CD8-positive, alpha-beta T cell (primary cell): ENCODE measurements at regions of chr17 and their contacts with region 1.

Region 1: GRCh38 chr17:45247429-45248131 is 14.3 kb downstream of the SPATA32 start:
- DNase-seq: peak; percentile 95 to 99 (median 98)
- ATAC-seq: peak; percentile 81
- H3K4me3 ChIP-seq: peak overlapping the region; percentile 58 to 94
- H3K4me3 Mint-ChIP-seq: peak overlapping the region; percentile 87
- H3K27ac ChIP-seq: peak overlapping the region; percentile 88 to 89
- H3K27ac Mint-ChIP-seq: peak overlapping the region; percentile 97
- H3K4me1 ChIP-seq: peaks cover 67% of the 10 kb centered on the region
- H3K4me1 Mint-ChIP-seq: peaks cover 61% of the 10 kb centered on the region
- H3K27me3 ChIP-seq: no peaks in the 10 kb centered on the region
- H3K27me3 Mint-ChIP-seq: no peaks in the 10 kb centered on the region
- CTCF ChIP-seq: no peak

Region 2: GRCh38 chr17:45077643-45078042 is 169.9 kb before region 1 on chr17:
- CTCF ChIA-PET with region 1: no interaction called
- POLR2A ChIA-PET with region 1: no interaction called
- intact Hi-C with region 1: no loop called
- DNase-seq: no peak
- ATAC-seq: no peak
- H3K4me3 ChIP-seq: no peak overlapping the region
- H3K4me3 Mint-ChIP-seq: no peak overlapping the region
- H3K27ac ChIP-seq: no peak overlapping the region
- H3K27ac Mint-ChIP-seq: peak overlapping the region; percentile 32
- H3K4me1 ChIP-seq: no peaks in the 10 kb centered on the region
- H3K4me1 Mint-ChIP-seq: peaks cover 27% of the 10 kb centered on the region
- H3K27me3 ChIP-seq: no peaks in the 10 kb centered on the region
- H3K27me3 Mint-ChIP-seq: no peaks in the 10 kb centered on the region
- CTCF ChIP-seq: no peak

Region 3: GRCh38 chr17:45148183-45149036 is 99.2 kb before region 1 on chr17 and contains the start of gene HEXIM1:
- CTCF ChIA-PET with region 1: no interaction called
- POLR2A ChIA-PET with region 1: interaction called, 28 read pairs
- intact Hi-C with region 1: loop called (anchors 1 kb)
- DNase-seq: peak; percentile 98 to 100 (median 99)
- ATAC-seq: peak; percentile 80
- H3K4me3 ChIP-seq: peak within 1 kb of the TSS; percentile 68 to 80
- H3K4me3 Mint-ChIP-seq: peak within 1 kb of the TSS; percentile 98
- H3K27ac ChIP-seq: peak within 1 kb of the TSS; percentile 84 to 94
- H3K27ac Mint-ChIP-seq: peak within 1 kb of the TSS; percentile 100
- H3K4me1 ChIP-seq: peaks cover 41% of the 10 kb centered on the region
- H3K4me1 Mint-ChIP-seq: peaks cover 54% of the 10 kb centered on the region
- H3K27me3 ChIP-seq: no peaks in the 10 kb centered on the region
- H3K27me3 Mint-ChIP-seq: no peaks in the 10 kb centered on the region
- CTCF ChIP-seq: no peak
- total RNA-seq, gene HEXIM1: 76.5 to 77.2 TPM

Region 4: GRCh38 chr17:45218895-45219661 is 28.5 kb before region 1 on chr17:
- CTCF ChIA-PET with region 1: interaction called, 1,097 read pairs
- POLR2A ChIA-PET with region 1: interaction called, 40 read pairs
- intact Hi-C with region 1: loop called in 1 of 2 experiments (anchors 1 kb)
- DNase-seq: peak; percentile 79 to 95 (median 89)
- ATAC-seq: peak; percentile 45
- H3K4me3 ChIP-seq: peak overlapping the region in 1 of 2 experiments; percentile 1
- H3K4me3 Mint-ChIP-seq: peak overlapping the region; percentile 91
- H3K27ac ChIP-seq: no peak overlapping the region
- H3K27ac Mint-ChIP-seq: peak overlapping the region; percentile 90
- H3K4me1 ChIP-seq: peaks cover 25% of the 10 kb centered on the region
- H3K4me1 Mint-ChIP-seq: peaks cover 37% of the 10 kb centered on the region
- H3K27me3 ChIP-seq: no peaks in the 10 kb centered on the region
- H3K27me3 Mint-ChIP-seq: no peaks in the 10 kb centered on the region
- CTCF ChIP-seq: peak; percentile 96

Region 5: DNA sequence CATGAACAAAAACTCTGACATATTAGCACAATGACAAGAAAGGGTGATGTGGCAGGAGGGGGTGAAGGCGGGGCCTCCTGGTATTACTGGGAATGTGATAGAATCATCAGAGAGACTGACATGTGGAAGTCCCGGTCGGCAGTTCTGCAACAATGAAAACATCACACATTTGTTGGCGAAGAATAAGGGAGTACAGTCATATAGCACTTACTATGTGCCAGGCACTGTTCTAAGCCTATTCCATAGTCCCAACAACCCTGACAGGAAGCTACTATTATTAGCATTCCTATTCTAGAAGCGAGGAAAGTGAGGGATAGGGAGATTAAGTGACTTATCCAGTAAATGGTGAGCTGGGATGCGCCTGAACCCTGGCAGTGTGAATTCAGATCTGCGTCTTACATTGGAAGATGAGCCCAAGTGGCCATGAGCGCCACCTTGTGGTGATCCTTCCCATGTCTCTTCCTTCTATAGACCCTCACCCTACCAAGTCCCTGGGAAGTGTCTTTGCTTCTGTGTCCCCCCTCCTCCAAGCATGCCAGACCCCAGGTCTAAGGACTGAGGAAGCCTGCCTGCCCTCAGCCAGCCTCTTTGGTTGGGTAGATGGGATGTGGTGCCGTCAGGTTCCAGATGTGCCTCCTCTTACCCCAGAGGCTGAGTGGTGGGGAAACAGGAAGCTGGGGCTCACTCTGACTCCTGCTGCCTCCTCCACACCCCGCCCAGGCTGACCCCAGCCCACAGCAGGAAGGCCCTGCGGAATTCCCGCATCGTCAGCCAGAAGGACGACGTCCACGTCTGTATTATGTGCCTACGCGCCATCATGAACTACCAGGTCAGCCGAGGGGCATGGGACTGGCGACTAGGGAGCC is 11.9 kb before region 1 on chr17:
- CTCF ChIA-PET with region 1: interaction called, 1,097 read pairs
- POLR2A ChIA-PET with region 1: interaction called, 124 read pairs
- intact Hi-C with region 1: loop called in 1 of 2 experiments (anchors 1 kb)
- DNase-seq: peak; percentile 62 to 90 (median 83)
- ATAC-seq: peak; percentile 62
- H3K4me3 ChIP-seq: no peak overlapping the region
- H3K4me3 Mint-ChIP-seq: no peak overlapping the region
- H3K27ac ChIP-seq: peak overlapping the region in 1 of 2 experiments; percentile 60
- H3K27ac Mint-ChIP-seq: peak overlapping the region; percentile 66
- H3K4me1 ChIP-seq: peaks cover 45% of the 10 kb centered on the region
- H3K4me1 Mint-ChIP-seq: peaks cover 51% of the 10 kb centered on the region
- H3K27me3 ChIP-seq: no peaks in the 10 kb centered on the region
- H3K27me3 Mint-ChIP-seq: no peaks in the 10 kb centered on the region
- CTCF ChIP-seq: peak; percentile 71

Region 6: GRCh38 chr17:45270828-45271418 is 23.3 kb after region 1 on chr17:
- CTCF ChIA-PET with region 1: interaction called, 19 read pairs
- POLR2A ChIA-PET with region 1: interaction called, 4 read pairs
- intact Hi-C with region 1: loop called in 1 of 2 experiments (anchors 1 kb)
- DNase-seq: peak; percentile 21 to 75 (median 58)
- ATAC-seq: peak; percentile 95
- H3K4me3 ChIP-seq: no peak overlapping the region
- H3K4me3 Mint-ChIP-seq: no peak overlapping the region
- H3K27ac ChIP-seq: no peak overlapping the region
- H3K27ac Mint-ChIP-seq: peak overlapping the region; percentile 27
- H3K4me1 ChIP-seq: no peaks in the 10 kb centered on the region
- H3K4me1 Mint-ChIP-seq: peaks cover 6% of the 10 kb centered on the region
- H3K27me3 ChIP-seq: no peaks in the 10 kb centered on the region
- H3K27me3 Mint-ChIP-seq: no peaks in the 10 kb centered on the region
- CTCF ChIP-seq: peak; percentile 84

Region 7: GRCh38 chr17:45307290-45308015 is 59.9 kb after region 1 on chr17:
- CTCF ChIA-PET with region 1: interaction called, 9 read pairs
- POLR2A ChIA-PET with region 1: interaction called, 15 read pairs
- intact Hi-C with region 1: no loop called
- DNase-seq: peak in 4 of 9 experiments; percentile 36 to 65 (median 42)
- ATAC-seq: peak; percentile 55
- H3K4me3 ChIP-seq: no peak overlapping the region
- H3K4me3 Mint-ChIP-seq: peak overlapping the region; percentile 42
- H3K27ac ChIP-seq: peak overlapping the region; percentile 32 to 33
- H3K27ac Mint-ChIP-seq: peak overlapping the region; percentile 81
- H3K4me1 ChIP-seq: peaks cover 62% of the 10 kb centered on the region
- H3K4me1 Mint-ChIP-seq: peaks cover 77% of the 10 kb centered on the region
- H3K27me3 ChIP-seq: no peaks in the 10 kb centered on the region
- H3K27me3 Mint-ChIP-seq: no peaks in the 10 kb centered on the region
- CTCF ChIP-seq: no peak